Body of pancreas (tissue), 4 donors: ENCODE measurements at regions of chr15 and their contacts with region 1.

Region 1: DNA sequence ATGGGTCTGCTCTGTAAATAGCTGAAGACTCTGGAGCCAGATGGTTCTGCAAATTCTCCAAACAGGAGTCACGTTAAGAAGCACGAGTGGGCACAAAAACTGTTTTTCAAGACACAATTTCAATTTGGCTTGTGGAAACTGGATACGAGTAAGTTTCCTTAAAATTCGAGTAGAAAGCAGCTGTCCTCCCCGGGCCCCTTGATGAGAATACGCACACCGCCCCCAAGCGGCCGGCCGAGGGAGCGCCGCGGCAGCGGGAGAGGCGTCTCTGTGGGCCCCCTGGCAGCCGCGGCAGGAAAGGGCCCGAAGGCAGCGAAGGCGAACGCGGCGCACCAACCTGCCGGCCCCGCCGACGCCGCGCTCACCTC is 778 bp upstream of the THBS1 start:
- DNase-seq: peak; percentile 91 to 95 (median 92)
- ATAC-seq: peak; percentile 79
- H3K4me3 ChIP-seq: peak overlapping the region in 1 of 2 donors; percentile 24
- H3K27ac ChIP-seq: peak overlapping the region; percentile 79 to 85 (median 80)
- H3K4me1 ChIP-seq: peaks cover 42% of the 10 kb centered on the region
- H3K27me3 ChIP-seq: no peaks in the 10 kb centered on the region
- CTCF ChIP-seq: peak; percentile 88 to 99 (median 96)
- POLR2A ChIP-seq: no peak

Region 2: GRCh38 chr15:38714309-38715072 is 865.6 kb before region 1 on chr15:
- intact Hi-C with region 1: loop called (anchors 10 kb)
- DNase-seq: peak in 1 of 4 donors; percentile 8
- ATAC-seq: no peak
- H3K4me3 ChIP-seq: no peak overlapping the region
- H3K27ac ChIP-seq: no peak overlapping the region
- H3K4me1 ChIP-seq: no peaks in the 10 kb centered on the region
- H3K27me3 ChIP-seq: no peaks in the 10 kb centered on the region
- CTCF ChIP-seq: no peak
- POLR2A ChIP-seq: no peak

Region 3: GRCh38 chr15:38817427-38818156 is 762.5 kb before region 1 on chr15:
- intact Hi-C with region 1: loop called (anchors 5 kb)
- DNase-seq: peak; percentile 90 to 95 (median 92)
- ATAC-seq: peak; percentile 97
- H3K4me3 ChIP-seq: no peak overlapping the region
- H3K27ac ChIP-seq: peak overlapping the region in 2 of 4 donors; percentile 10 to 20
- H3K4me1 ChIP-seq: peaks cover 11% of the 10 kb centered on the region
- H3K27me3 ChIP-seq: no peaks in the 10 kb centered on the region
- CTCF ChIP-seq: peak; percentile 95 to 100 (median 99)
- POLR2A ChIP-seq: no peak

Region 4: DNA sequence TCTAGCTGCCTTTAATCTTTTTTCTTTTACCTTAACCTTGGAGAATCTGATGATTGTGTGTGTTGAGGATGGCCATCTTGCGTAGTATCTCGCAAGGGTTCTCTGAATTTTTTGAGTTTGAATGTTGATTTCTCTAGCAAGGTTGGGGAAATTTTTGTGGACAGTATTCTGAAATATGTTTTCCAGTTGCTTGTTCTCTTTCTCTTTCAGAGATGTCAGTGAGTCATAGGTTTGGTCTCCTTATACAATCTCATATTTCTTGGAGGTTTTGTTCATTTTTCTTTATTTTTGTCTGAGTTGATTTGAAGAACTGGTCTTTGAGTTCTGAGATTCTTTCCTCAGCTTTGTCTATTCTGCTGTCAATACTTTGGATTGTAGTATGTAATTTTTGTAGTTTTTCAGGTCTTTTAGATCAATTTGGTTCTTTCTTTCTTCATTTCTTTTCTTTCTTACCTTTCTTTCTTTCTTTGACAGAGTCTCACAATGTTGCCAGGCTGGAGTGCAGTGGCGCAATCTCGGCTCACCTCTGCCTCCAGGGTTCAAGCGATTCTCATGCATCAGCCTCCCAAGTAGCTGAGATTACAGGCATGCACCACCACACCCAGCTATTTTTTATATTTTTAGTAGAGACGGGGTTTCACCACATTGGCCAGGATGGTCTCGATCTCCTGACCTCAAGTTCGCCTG is 649.1 kb before region 1 on chr15:
- intact Hi-C with region 1: no loop called
- DNase-seq: no peak
- ATAC-seq: no peak
- H3K4me3 ChIP-seq: no peak overlapping the region
- H3K27ac ChIP-seq: no peak overlapping the region
- H3K4me1 ChIP-seq: no peaks in the 10 kb centered on the region
- H3K27me3 ChIP-seq: no peaks in the 10 kb centered on the region
- CTCF ChIP-seq: no peak
- POLR2A ChIP-seq: no peak

Region 5: DNA sequence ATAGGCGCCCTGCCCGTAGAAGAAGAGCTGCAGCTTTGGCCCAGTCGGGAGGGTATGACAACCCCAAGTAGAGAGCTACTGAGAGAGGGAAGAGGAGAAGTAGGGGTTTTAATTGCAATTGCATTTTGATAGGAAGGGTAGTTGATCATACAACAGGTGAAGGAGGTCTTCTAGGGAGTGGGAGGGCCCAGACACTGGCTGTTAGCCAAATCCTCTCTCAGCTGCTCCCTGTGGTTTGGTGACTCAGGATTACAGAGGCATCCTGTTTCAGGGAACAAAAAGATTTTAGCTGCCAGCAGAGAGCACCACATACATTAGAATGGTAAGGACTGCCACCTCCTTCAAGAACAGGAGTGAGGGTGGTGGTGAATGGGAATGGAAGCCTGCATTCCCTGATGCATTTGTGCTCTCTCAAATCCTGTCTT is 408.1 kb before region 1 on chr15:
- intact Hi-C with region 1: loop called (anchors 10 kb)
- DNase-seq: peak; percentile 54 to 74 (median 68)
- ATAC-seq: peak; percentile 83
- H3K4me3 ChIP-seq: no peak overlapping the region
- H3K27ac ChIP-seq: peak overlapping the region; percentile 35 to 68 (median 50)
- H3K4me1 ChIP-seq: peaks cover 17% of the 10 kb centered on the region
- H3K27me3 ChIP-seq: no peaks in the 10 kb centered on the region
- CTCF ChIP-seq: peak in 6 of 7 experiments; percentile 17 to 82 (median 66)
- POLR2A ChIP-seq: no peak

Region 6: DNA sequence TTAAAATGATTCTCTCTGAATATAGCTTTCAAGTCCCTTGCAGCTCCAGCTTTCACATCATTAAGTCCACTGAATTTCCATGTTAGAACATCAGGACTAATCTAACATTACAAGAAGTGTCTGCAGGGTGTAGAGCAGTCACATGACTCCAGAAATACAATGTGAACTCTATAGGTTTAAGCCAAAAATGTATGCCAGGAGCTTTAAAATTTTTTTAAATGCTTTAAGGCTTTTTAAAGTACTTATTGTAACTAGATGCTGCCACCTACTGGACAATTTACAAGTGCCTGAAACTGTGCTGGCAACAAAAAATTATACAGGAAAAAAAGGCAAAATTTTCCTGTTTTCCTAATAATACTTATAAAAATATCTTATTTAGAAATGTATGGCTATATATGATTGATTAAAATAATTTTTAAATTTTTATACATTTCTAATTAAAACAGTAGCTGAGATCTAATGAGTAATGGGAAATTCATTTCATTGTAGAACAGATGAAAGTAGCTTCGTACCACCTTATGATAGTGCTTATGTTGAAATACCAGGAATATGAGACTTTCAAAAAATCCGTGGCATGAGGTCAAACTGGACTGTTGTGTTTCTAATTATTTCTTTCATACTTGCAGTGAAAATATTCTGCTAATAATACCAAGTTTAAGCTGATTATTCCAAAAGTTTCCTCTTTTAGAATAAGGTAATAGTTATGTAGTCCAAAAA is 176.9 kb after region 1 on chr15:
- intact Hi-C with region 1: no loop called
- DNase-seq: peak in 3 of 4 donors; percentile 27 to 55 (median 39)
- ATAC-seq: no peak
- H3K4me3 ChIP-seq: no peak overlapping the region
- H3K27ac ChIP-seq: no peak overlapping the region
- H3K4me1 ChIP-seq: no peaks in the 10 kb centered on the region
- H3K27me3 ChIP-seq: no peaks in the 10 kb centered on the region
- CTCF ChIP-seq: peak; percentile 53 to 97 (median 72)
- POLR2A ChIP-seq: no peak